ENCODE measurements at regions of chr11 and their contacts with region 1.

Region 1: DNA sequence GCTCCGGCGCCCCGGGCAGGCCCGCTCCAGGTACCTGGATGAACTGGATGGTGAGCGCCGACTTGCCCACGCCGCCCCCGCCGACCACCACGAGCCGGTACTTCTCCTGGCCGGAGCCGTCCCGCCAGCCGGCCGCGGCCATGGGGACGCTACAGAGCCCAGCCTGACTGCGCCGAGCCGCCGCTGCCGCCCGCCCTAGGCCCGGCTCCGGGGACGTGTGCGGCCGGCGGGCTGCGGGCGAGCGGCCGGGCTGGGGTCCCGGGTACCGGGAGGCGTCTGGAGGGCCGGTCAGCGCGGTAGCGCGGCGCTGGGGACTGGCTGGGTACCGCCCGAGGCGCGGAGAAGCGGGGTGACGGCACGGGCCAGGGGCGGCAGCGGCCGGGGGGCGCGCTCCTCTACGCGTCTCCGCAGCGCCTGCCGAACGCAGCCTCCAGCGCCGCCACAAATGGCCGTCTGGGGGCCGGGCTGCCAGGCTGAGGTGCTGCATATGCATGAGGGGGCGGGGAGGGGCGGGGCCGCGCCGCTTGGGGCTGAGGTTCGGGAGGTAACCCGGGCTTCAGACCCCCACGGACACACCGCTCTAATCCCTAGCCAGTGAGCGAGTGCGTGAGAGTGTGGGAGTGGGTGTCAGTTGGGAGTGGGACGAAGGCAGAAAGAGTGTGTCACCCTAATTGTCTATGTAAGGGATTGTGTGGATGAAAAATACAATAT is at the start of gene RRAS2:
- DNase-seq: peak; percentile 90
- ATAC-seq: peak; percentile 91
- H3K4me3 ChIP-seq: peak within 1 kb of the TSS; percentile 65 to 94 (median 88)
- H3K4me3 Mint-ChIP-seq: peak within 1 kb of the TSS; percentile 91
- H3K27ac ChIP-seq: peak within 1 kb of the TSS; percentile 52 to 76
- H3K27ac Mint-ChIP-seq: peak within 1 kb of the TSS; percentile 87
- H3K4me1 ChIP-seq: peaks cover 28 to 36% of the 10 kb centered on the region in 2 donors
- H3K4me1 Mint-ChIP-seq: peaks cover 43% of the 10 kb centered on the region
- H3K27me3 ChIP-seq: no peaks in the 10 kb centered on the region
- H3K27me3 Mint-ChIP-seq: no peaks in the 10 kb centered on the region
- CTCF ChIP-seq: no peak
- total RNA-seq, gene RRAS2: 72.4 and 80.1 TPM in 2 replicates

Region 2: DNA sequence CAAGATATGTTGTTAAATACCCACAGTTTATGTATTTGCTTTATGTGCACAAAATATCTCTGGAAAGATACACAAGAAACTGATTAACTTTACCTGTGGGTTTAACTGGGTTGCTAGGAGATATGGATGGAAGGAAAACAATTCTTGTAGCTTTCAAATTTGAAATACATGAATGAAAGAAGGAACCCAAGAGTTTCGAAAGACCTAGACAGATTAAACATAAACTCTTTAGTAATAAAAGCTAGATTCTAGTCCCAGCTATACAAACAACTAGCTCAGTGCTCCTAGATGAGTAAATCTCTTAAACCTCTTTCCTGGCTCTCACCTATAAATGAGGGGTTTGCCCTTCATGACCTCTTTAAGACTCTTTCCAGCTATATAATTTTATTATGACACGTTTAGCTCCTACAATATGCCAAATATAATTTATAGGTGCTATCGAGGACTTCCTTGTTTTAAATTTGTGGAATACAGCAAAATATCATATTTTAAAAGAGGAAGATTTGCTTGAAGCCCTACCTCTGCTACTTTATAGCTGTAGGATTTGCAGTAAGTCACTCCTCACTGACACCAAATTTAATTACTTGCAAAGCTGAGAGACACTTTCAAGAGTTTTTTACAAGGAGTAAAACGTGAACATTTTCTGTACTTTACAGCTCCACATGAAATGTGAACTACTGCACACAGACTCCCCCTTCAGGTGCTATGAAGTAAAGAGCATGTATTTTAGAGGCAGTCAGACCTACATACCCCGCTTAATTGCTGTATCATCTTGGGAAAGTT is 50.6 kb before region 1 on chr11:
- CTCF ChIA-PET with region 1: interaction called, 14 read pairs
- POLR2A ChIA-PET with region 1: interaction called, 5 read pairs
- intact Hi-C with region 1: no loop called
- DNase-seq: peak; percentile 61
- ATAC-seq: peak; percentile 65
- H3K4me3 ChIP-seq: peak overlapping the region in 1 of 5 experiments; percentile 8
- H3K4me3 Mint-ChIP-seq: peak overlapping the region; percentile 0
- H3K27ac ChIP-seq: peak overlapping the region; percentile 64 to 97
- H3K27ac Mint-ChIP-seq: no peak overlapping the region
- H3K4me1 ChIP-seq: peaks cover 83 to 90% of the 10 kb centered on the region in 2 donors
- H3K4me1 Mint-ChIP-seq: peaks cover 41% of the 10 kb centered on the region
- H3K27me3 ChIP-seq: no peaks in the 10 kb centered on the region
- H3K27me3 Mint-ChIP-seq: no peaks in the 10 kb centered on the region
- CTCF ChIP-seq: peak; percentile 74

Region 3: DNA sequence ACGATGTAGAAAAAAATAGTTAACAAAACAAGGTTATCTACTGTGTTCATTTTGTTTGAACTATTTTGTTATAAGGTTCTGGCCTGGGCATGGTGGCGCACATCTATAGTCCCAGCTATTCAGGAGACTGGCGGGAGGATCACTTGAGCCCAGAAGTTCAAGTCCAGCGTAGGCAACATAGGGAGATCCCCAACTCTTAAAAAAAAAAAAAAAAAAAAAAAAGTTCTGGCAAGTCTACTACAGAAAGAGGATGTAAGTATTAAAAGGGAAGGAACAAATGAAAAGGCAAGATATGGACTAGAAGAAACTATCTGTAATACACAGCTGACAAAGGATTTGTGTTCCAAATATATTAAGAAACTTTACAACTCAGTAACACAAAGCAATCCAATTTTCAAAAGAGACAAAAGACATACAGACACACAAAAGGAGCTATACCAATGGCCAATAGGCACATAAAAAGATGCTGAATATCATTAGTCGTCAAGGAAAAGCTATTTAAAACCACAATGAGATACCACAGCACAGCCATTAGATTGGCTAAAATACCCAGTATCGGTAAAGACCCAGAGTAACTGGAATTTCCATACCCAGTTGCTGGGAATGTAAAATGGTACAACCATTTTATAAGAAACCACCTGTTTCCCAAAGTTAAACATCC is 27.3 kb before region 1 on chr11:
- CTCF ChIA-PET with region 1: interaction called, 6 read pairs
- POLR2A ChIA-PET with region 1: interaction called, 6 read pairs
- intact Hi-C with region 1: loop called (anchors 2 kb)
- DNase-seq: peak; percentile 70
- ATAC-seq: peak; percentile 75
- H3K4me3 ChIP-seq: peak overlapping the region in 1 of 5 experiments; percentile 13
- H3K4me3 Mint-ChIP-seq: peak overlapping the region; percentile 70
- H3K27ac ChIP-seq: peak overlapping the region; percentile 53 to 74
- H3K27ac Mint-ChIP-seq: peak overlapping the region; percentile 79
- H3K4me1 ChIP-seq: peaks cover 66 to 75% of the 10 kb centered on the region in 2 donors
- H3K4me1 Mint-ChIP-seq: peaks cover 72% of the 10 kb centered on the region
- H3K27me3 ChIP-seq: no peaks in the 10 kb centered on the region
- H3K27me3 Mint-ChIP-seq: no peaks in the 10 kb centered on the region
- CTCF ChIP-seq: no peak

Region 4: GRCh38 chr11:14347991-14348390 is 10.9 kb before region 1 on chr11:
- CTCF ChIA-PET with region 1: interaction called, 5 read pairs
- POLR2A ChIA-PET with region 1: interaction called, 5 read pairs
- intact Hi-C with region 1: loop called (anchors 1 kb)
- DNase-seq: no peak
- ATAC-seq: no peak
- H3K4me3 ChIP-seq: no peak overlapping the region
- H3K4me3 Mint-ChIP-seq: peak overlapping the region; percentile 23
- H3K27ac ChIP-seq: peak overlapping the region in 1 of 2 donors; percentile 63
- H3K27ac Mint-ChIP-seq: peak overlapping the region; percentile 44
- H3K4me1 ChIP-seq: peaks cover 38 to 51% of the 10 kb centered on the region in 2 donors
- H3K4me1 Mint-ChIP-seq: peaks cover 65% of the 10 kb centered on the region
- H3K27me3 ChIP-seq: no peaks in the 10 kb centered on the region
- H3K27me3 Mint-ChIP-seq: no peaks in the 10 kb centered on the region
- CTCF ChIP-seq: no peak

Region 5: DNA sequence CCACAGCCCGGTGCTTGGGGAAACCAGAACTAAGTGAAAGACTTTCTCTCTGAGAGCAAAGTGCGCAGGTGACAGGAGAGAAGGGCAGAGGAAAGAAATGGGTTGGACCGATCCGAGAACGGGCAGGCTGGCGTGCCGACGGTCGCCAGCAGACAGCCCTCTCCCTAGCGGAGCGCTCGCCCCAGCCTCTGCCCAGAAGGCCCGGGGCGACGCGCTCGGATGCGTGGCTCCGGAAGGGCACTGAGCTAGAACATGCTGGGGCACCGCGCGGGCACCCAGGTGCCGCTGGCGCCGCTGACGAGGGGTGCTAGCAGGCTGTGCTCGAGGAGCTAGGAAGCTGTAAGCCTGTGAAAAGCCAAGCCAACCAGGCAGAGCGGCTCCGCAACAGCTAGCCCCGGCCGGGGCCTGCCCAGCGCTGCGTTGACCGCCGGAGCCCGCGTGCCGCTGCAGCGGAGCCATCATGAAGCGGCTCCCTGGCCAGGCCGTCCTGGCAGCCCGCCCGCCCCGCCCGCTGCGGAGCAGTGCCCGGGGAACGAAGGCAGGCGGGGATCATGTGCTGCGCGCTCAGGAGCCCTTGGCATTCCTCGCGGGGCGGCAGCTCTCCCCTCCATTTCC is 22.2 kb after region 1 on chr11:
- CTCF ChIA-PET with region 1: no interaction called
- POLR2A ChIA-PET with region 1: no interaction called
- intact Hi-C with region 1: loop called (anchors 1 kb)
- DNase-seq: peak; percentile 85
- ATAC-seq: peak; percentile 96
- H3K4me3 ChIP-seq: peak overlapping the region in 4 of 5 experiments; percentile 47 to 69 (median 62)
- H3K4me3 Mint-ChIP-seq: peak overlapping the region; percentile 89
- H3K27ac ChIP-seq: peak overlapping the region; percentile 36 to 56
- H3K27ac Mint-ChIP-seq: peak overlapping the region; percentile 73
- H3K4me1 ChIP-seq: peaks cover 12 to 14% of the 10 kb centered on the region in 2 donors
- H3K4me1 Mint-ChIP-seq: peaks cover 19% of the 10 kb centered on the region
- H3K27me3 ChIP-seq: peaks cover 0 to 3% (median 0%) of the 10 kb centered on the region in 4 experiments
- H3K27me3 Mint-ChIP-seq: peaks cover 6% of the 10 kb centered on the region
- CTCF ChIP-seq: no peak

Region 6: GRCh38 chr11:14519917-14520746 is 161.2 kb after region 1 on chr11 and contains the start of gene PSMA1:
- CTCF ChIA-PET with region 1: no interaction called
- POLR2A ChIA-PET with region 1: no interaction called
- intact Hi-C with region 1: loop called (anchors 5 kb)
- DNase-seq: peak; percentile 94
- ATAC-seq: peak; percentile 93
- H3K4me3 ChIP-seq: peak within 1 kb of the TSS; percentile 69 to 93 (median 89)
- H3K4me3 Mint-ChIP-seq: peak within 1 kb of the TSS; percentile 98
- H3K27ac ChIP-seq: peak within 1 kb of the TSS; percentile 83 to 91
- H3K27ac Mint-ChIP-seq: peak within 1 kb of the TSS; percentile 97
- H3K4me1 ChIP-seq: peaks cover 13 to 18% of the 10 kb centered on the region in 2 donors
- H3K4me1 Mint-ChIP-seq: peaks cover 21% of the 10 kb centered on the region
- H3K27me3 ChIP-seq: no peaks in the 10 kb centered on the region
- H3K27me3 Mint-ChIP-seq: no peaks in the 10 kb centered on the region
- CTCF ChIP-seq: no peak
- total RNA-seq, gene PSMA1: 115 and 123 TPM in 2 replicates

Measured in B cell (primary cell).